Calu3 (cell line): ENCODE measurements at regions of chr6 and their contacts with region 1.

Region 1: GRCh38 chr6:127266178-127266891 is at the start of gene RNF146:
- DNase-seq: peak; percentile 72
- H3K4me3 Mint-ChIP-seq: peak within 1 kb of the TSS; percentile 88
- H3K27ac Mint-ChIP-seq: peak within 1 kb of the TSS; percentile 95
- H3K4me1 Mint-ChIP-seq: no peaks in the 10 kb centered on the region
- H3K27me3 Mint-ChIP-seq: no peaks in the 10 kb centered on the region
- CTCF ChIP-seq: peak; percentile 56
- total RNA-seq, gene RNF146: 21.9 and 24.1 TPM in 2 replicates

Region 2: GRCh38 chr6:127069659-127070279 is 196.6 kb before region 1 on chr6:
- CTCF ChIA-PET with region 1: no interaction called
- intact Hi-C with region 1: no loop called
- DNase-seq: no peak
- H3K4me3 Mint-ChIP-seq: no peak overlapping the region
- H3K27ac Mint-ChIP-seq: no peak overlapping the region
- H3K4me1 Mint-ChIP-seq: no peaks in the 10 kb centered on the region
- H3K27me3 Mint-ChIP-seq: no peaks in the 10 kb centered on the region
- CTCF ChIP-seq: peak; percentile 25

Region 3: GRCh38 chr6:127186889-127187288 is 79.4 kb before region 1 on chr6:
- CTCF ChIA-PET with region 1: interaction called, 18 read pairs
- intact Hi-C with region 1: loop called (anchors 1 kb)
- DNase-seq: peak; percentile 66
- H3K4me3 Mint-ChIP-seq: no peak overlapping the region
- H3K27ac Mint-ChIP-seq: no peak overlapping the region
- H3K4me1 Mint-ChIP-seq: no peaks in the 10 kb centered on the region
- H3K27me3 Mint-ChIP-seq: no peaks in the 10 kb centered on the region
- CTCF ChIP-seq: peak; percentile 36